ENCODE measurements at regions of chr1 and their contacts with region 1.

Region 1: GRCh38 chr1:15714406-15715136 is 21.5 kb upstream of the SLC25A34 start:
- DNase-seq: no peak
- ATAC-seq: no peak; the same call in 1 of the 2 replicates
- H3K4me3 ChIP-seq: no peak overlapping the region
- H3K27ac ChIP-seq: no peak overlapping the region
- H3K4me1 ChIP-seq: no peaks in the 10 kb centered on the region
- H3K27me3 ChIP-seq: no peaks in the 10 kb centered on the region
- CTCF ChIP-seq: no peak

Region 2: GRCh38 chr1:15680621-15681345 is 33.8 kb before region 1 on chr1:
- CTCF ChIA-PET with region 1: no interaction called
- POLR2A ChIA-PET with region 1: interaction called, 13 read pairs
- intact Hi-C with region 1: no loop called
- DNase-seq: peak; percentile 89
- ATAC-seq: no peak
- H3K4me3 ChIP-seq: no peak overlapping the region
- H3K27ac ChIP-seq: peak overlapping the region; percentile 75
- H3K4me1 ChIP-seq: peaks cover 35% of the 10 kb centered on the region
- H3K27me3 ChIP-seq: no peaks in the 10 kb centered on the region
- CTCF ChIP-seq: no peak

Region 3: DNA sequence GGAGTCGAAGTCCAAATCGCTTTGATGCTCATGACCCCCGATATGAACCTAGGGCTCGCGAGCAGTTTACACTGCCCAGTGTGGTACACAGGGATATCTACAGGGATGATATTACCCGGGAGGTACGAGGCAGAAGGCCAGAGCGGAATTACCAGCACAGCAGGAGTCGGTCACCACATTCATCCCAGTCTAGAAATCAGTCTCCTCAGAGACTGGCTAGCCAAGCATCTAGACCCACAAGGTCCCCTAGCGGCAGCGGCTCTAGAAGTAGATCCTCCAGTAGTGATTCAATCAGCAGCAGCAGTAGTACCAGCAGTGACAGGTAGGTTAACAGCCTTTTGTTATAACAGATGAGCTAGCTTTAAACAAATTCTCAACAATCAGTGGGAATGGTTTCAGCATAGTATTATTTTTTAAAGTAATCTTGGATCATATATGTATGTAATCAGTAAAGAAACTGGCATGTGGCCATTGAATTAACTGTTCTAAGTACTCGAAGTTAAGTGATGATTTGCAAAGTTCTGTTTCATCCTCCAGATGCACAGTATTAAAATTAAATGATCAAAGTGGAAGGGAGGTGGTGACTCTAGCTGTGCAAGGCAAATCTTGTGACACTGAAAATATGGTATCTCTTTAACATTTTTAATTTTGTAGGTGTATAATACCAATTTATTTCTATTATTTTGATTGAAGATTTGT is 161.9 kb after region 1 on chr1:
- CTCF ChIA-PET with region 1: interaction called, 10 read pairs
- POLR2A ChIA-PET with region 1: no interaction called
- intact Hi-C with region 1: no loop called
- DNase-seq: no peak
- ATAC-seq: peak; percentile 31; the same call in 1 of the 2 replicates
- H3K4me3 ChIP-seq: no peak overlapping the region
- H3K27ac ChIP-seq: no peak overlapping the region
- H3K4me1 ChIP-seq: no peaks in the 10 kb centered on the region
- H3K27me3 ChIP-seq: no peaks in the 10 kb centered on the region
- CTCF ChIP-seq: no peak; the same call in 1 of the 2 replicates

Measured in PC-3 (cell line).